OCI-LY7 (cell line): ENCODE measurements at regions of chr1 and their contacts with region 1.

Region 1: DNA sequence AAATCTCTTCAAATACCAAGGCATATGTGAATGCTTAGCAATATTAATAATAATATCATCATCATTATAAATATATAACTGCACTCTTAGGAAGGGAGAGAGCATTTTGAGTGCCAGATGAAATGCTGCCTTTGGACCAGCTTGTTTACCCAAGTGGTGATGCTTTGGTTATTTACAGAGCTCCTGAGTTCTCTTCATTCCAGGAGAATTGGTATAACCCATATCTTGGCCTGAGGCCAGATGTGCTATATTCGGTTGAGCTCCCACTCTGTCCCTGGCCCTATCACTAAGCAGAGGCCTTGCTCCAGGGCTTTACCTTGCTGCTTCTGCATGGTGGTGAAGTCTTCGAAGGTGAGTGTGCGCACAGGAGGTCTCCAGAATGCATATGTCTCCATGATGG is 89.4 kb downstream of the TBX15 start:
- DNase-seq: no peak
- H3K4me3 ChIP-seq: no peak overlapping the region
- H3K27ac ChIP-seq: no peak overlapping the region
- H3K4me1 ChIP-seq: no peaks in the 10 kb centered on the region
- CTCF ChIP-seq: no peak

Region 2: DNA sequence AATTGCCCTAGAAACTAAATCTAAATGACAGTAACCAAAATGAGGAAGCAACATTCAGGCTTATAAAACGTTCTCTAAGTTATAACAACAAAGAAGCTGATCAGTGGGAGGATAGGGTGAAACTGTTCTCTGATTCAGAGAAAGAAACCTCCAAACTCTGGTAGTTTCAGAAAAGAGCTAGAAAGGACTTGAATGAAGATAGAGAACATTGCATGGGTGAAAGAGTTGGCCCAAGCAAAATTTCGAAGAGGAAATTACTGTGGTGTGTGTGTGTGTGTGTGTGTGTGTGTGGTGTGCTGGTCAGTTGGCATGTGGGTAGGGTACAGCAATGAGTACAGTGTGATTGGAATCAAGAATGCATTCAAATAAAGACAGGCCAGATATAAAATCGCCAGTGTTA is 697.2 kb before region 1 on chr1:
- CTCF ChIA-PET with region 1: no interaction called
- POLR2A ChIA-PET with region 1: no interaction called
- intact Hi-C with region 1: no loop called
- DNase-seq: no peak
- H3K4me3 ChIP-seq: no peak overlapping the region
- H3K27ac ChIP-seq: no peak overlapping the region
- H3K4me1 ChIP-seq: no peaks in the 10 kb centered on the region
- CTCF ChIP-seq: no peak

Region 3: GRCh38 chr1:118868387-118868786 is 30.3 kb before region 1 on chr1:
- CTCF ChIA-PET with region 1: no interaction called
- POLR2A ChIA-PET with region 1: interaction called, 3 read pairs
- intact Hi-C with region 1: loop called (anchors 2 kb)
- DNase-seq: no peak
- H3K4me3 ChIP-seq: no peak overlapping the region
- H3K27ac ChIP-seq: no peak overlapping the region
- H3K4me1 ChIP-seq: no peaks in the 10 kb centered on the region
- CTCF ChIP-seq: no peak

Region 4: GRCh38 chr1:118949315-118949714 is 50.6 kb after region 1 on chr1:
- CTCF ChIA-PET with region 1: no interaction called
- POLR2A ChIA-PET with region 1: no interaction called
- intact Hi-C with region 1: loop called (anchors 5 kb)
- DNase-seq: no peak
- H3K4me3 ChIP-seq: no peak overlapping the region
- H3K27ac ChIP-seq: no peak overlapping the region
- H3K4me1 ChIP-seq: no peaks in the 10 kb centered on the region
- CTCF ChIP-seq: no peak